ENCODE measurements at regions of chr11 and their contacts with region 1.

Region 1: DNA sequence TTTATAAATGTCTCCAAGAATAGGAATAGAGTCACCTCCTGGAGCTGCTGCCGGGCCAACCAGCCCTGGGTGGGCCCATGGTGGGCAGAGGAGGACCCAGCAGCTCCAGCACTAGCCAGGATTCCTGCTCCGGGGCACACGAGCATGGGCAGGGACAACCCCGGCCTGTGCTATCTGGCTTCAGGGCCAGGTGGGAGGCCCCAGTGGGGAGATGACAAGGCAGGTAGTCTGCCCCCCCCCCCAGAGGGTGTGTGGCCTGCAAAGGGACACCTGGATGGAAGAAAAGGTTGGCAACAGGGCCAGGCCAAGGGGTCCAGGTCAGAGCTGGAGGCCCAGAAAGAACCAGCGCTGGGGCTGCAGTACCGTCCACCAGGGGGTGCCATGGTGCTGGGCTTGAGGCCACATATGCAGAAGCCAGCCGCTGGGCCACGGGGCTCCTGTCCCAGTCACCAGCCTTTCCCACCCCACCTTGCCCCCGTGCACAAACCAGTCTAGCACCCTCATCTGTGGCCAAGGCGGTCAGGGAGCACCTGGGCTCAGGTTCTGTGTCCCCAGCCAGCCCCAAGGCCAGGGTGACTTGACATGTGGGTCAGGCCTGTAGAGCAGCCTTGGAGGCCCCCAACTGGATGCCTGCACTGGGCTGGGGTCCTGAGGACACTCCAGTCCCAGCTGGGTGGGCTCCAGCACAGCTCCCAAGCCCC is 3.5 kb downstream of the TSPAN32 start:
- H3K4me3 Mint-ChIP-seq: peak overlapping the region; percentile 97
- H3K27ac Mint-ChIP-seq: peak overlapping the region; percentile 87
- H3K4me1 Mint-ChIP-seq: peaks cover 54% of the 10 kb centered on the region
- H3K27me3 Mint-ChIP-seq: no peaks in the 10 kb centered on the region

Region 2: GRCh38 chr11:2256923-2257716 is 48.2 kb before region 1 on chr11:
- intact Hi-C with region 1: no loop called
- H3K4me3 Mint-ChIP-seq: no peak overlapping the region
- H3K27ac Mint-ChIP-seq: no peak overlapping the region
- H3K4me1 Mint-ChIP-seq: no peaks in the 10 kb centered on the region
- H3K27me3 Mint-ChIP-seq: peaks cover 34% of the 10 kb centered on the region

Region 3: GRCh38 chr11:2269601-2270321 is 35.5 kb before region 1 on chr11:
- intact Hi-C with region 1: loop called (anchors 2 kb)
- H3K4me3 Mint-ChIP-seq: peak overlapping the region; percentile 84
- H3K27ac Mint-ChIP-seq: peak overlapping the region; percentile 92
- H3K4me1 Mint-ChIP-seq: peaks cover 53% of the 10 kb centered on the region
- H3K27me3 Mint-ChIP-seq: peaks cover 28% of the 10 kb centered on the region

Region 4: GRCh38 chr11:2400069-2400760 is 94.9 kb after region 1 on chr11 and contains the start of gene TSSC4:
- intact Hi-C with region 1: loop called (anchors 1 kb)
- H3K4me3 Mint-ChIP-seq: peak within 1 kb of the TSS; percentile 95
- H3K27ac Mint-ChIP-seq: peak within 1 kb of the TSS; percentile 93
- H3K4me1 Mint-ChIP-seq: peaks cover 33% of the 10 kb centered on the region
- H3K27me3 Mint-ChIP-seq: no peaks in the 10 kb centered on the region

Region 5: DNA sequence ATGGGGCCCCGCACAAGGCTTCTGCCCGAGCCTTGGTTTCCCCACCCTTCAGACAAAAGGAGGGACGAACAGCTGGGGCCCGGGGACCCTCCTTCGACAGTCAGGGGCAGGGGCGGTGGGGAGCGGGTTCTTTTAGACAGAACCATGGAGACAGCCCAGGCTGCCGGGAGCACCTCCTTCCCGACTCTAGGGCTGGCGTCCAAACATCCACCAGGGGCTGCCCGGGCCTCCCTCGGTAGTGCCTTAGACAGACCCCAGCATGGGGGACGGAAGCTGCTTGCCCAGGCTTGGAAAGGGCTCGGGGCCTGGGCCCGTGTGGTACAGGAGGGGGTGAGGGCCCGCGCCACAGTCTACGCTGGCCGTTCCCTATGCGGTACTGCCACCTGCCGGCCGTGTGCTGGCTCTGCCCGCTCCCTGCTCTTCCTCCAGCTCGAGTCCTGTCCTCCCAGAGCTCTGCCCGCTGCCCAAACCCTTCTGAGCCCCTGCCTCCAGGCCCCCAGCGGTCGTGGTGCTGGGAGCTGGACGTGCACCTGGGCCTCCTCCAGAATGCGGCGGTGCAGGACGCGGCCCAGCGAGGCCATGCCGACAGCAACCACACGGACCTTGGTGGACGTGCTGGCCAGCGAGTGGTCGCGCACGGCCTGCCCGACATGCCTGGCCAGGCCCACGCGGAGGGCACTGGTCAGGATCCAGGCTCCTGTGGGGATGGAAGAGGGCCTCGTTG is 115.4 kb after region 1 on chr11:
- intact Hi-C with region 1: loop called (anchors 1 kb)
- H3K4me3 Mint-ChIP-seq: no peak overlapping the region
- H3K27ac Mint-ChIP-seq: no peak overlapping the region
- H3K4me1 Mint-ChIP-seq: no peaks in the 10 kb centered on the region
- H3K27me3 Mint-ChIP-seq: peaks cover 42% of the 10 kb centered on the region

Region 6: GRCh38 chr11:2433106-2433925 is 128.0 kb after region 1 on chr11:
- intact Hi-C with region 1: no loop called
- H3K4me3 Mint-ChIP-seq: no peak overlapping the region
- H3K27ac Mint-ChIP-seq: no peak overlapping the region
- H3K4me1 Mint-ChIP-seq: no peaks in the 10 kb centered on the region
- H3K27me3 Mint-ChIP-seq: peaks cover 26% of the 10 kb centered on the region

Region 7: DNA sequence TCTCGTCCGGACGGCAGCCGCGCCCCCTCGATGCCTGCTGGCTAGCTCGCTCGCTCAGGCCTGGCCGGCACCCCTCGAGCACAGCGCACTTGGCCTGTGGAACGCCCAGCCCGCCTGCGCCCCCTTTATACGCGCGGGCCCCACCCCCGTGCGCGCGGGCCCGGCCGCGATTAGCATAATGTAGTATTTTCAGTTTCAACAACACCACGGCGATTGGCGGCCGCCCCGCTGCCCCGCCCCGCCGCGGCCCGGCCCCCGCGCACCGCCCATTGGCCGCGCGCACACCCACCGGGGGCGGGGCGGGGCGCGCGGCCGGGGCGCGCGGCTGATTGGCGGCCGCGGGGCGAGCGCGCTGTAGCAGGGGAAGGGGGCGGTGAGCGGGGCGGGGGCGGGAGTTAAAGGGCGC is 580.4 kb after region 1 on chr11 and contains the start of gene CDKN1C:
- intact Hi-C with region 1: loop called (anchors 10 kb)
- H3K4me3 Mint-ChIP-seq: peak within 1 kb of the TSS; percentile 86
- H3K27ac Mint-ChIP-seq: peak within 1 kb of the TSS; percentile 72
- H3K4me1 Mint-ChIP-seq: peaks cover 11% of the 10 kb centered on the region
- H3K27me3 Mint-ChIP-seq: peaks cover 71% of the 10 kb centered on the region

Measured in dendritic cell treated with granulocyte-macrophage colony-stimulating factor and Interleukin-4, amounts not matched to agents 40 ng/mL and 50 ng/mL, for 4 days (primary cell).